Right cardiac atrium (tissue), 5 donors: ENCODE measurements at regions of chr7 and their contacts with region 1.

Region 1: GRCh38 chr7:39948956-39949928 is 814 bp upstream of the CDK13 start:
- DNase-seq: peak; percentile 99 to 100 (median 99)
- ATAC-seq: peak; percentile 96
- H3K4me3 ChIP-seq: peak overlapping the region; percentile 70
- H3K27ac ChIP-seq: peak overlapping the region; percentile 99
- H3K4me1 ChIP-seq: no peaks in the 10 kb centered on the region
- H3K27me3 ChIP-seq: no peaks in the 10 kb centered on the region

Region 2: GRCh38 chr7:39832519-39833085 is 116.6 kb before region 1 on chr7:
- intact Hi-C with region 1: loop called in 1 of 4 experiments (anchors 5 kb)
- DNase-seq: no peak
- ATAC-seq: no peak
- H3K4me3 ChIP-seq: no peak overlapping the region
- H3K27ac ChIP-seq: no peak overlapping the region
- H3K4me1 ChIP-seq: no peaks in the 10 kb centered on the region
- H3K27me3 ChIP-seq: no peaks in the 10 kb centered on the region

Region 3: GRCh38 chr7:40057292-40057691 is 108.0 kb after region 1 on chr7:
- intact Hi-C with region 1: loop called in 2 of 4 experiments (anchors 5 to 10 kb)
- DNase-seq: peak in 1 of 3 donors; percentile 40
- ATAC-seq: peak; percentile 77 to 85
- H3K4me3 ChIP-seq: no peak overlapping the region
- H3K27ac ChIP-seq: no peak overlapping the region
- H3K4me1 ChIP-seq: peaks cover 2% of the 10 kb centered on the region
- H3K27me3 ChIP-seq: no peaks in the 10 kb centered on the region

Region 4: DNA sequence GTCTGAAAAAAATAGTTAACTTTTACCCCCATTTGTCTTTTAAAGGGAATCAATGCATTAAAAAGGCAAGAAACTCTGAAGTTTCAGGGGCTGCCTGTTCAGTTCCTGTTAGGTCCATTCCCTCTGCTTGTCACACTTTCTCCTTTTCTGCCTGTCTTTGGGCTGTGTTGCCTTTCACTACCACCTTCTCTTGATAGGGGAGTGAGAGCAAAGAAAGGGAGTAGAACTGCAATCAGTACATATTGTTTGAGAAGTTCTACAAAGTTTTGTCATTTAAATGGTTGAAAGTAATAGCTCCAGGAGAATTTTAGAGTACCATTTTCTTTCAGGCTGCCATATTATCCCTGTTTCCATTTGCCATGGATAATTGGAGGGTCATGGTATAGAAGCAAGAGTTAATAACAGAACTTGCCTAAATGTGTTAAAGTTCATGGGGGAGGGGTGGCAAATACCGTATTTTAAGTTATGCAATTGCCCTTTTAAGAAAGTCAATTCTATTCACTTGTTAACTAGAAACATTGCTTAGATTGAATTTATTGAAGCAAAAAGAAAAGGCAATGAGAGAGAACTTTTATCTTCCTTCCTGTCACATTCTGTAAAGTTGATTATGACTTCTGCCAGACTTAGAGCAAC is 146.6 kb after region 1 on chr7:
- intact Hi-C with region 1: no loop called
- DNase-seq: no peak
- ATAC-seq: no peak
- H3K4me3 ChIP-seq: no peak overlapping the region
- H3K27ac ChIP-seq: no peak overlapping the region
- H3K4me1 ChIP-seq: no peaks in the 10 kb centered on the region
- H3K27me3 ChIP-seq: no peaks in the 10 kb centered on the region